ENCODE measurements at regions of chr2 and their contacts with region 1.

Region 1: DNA sequence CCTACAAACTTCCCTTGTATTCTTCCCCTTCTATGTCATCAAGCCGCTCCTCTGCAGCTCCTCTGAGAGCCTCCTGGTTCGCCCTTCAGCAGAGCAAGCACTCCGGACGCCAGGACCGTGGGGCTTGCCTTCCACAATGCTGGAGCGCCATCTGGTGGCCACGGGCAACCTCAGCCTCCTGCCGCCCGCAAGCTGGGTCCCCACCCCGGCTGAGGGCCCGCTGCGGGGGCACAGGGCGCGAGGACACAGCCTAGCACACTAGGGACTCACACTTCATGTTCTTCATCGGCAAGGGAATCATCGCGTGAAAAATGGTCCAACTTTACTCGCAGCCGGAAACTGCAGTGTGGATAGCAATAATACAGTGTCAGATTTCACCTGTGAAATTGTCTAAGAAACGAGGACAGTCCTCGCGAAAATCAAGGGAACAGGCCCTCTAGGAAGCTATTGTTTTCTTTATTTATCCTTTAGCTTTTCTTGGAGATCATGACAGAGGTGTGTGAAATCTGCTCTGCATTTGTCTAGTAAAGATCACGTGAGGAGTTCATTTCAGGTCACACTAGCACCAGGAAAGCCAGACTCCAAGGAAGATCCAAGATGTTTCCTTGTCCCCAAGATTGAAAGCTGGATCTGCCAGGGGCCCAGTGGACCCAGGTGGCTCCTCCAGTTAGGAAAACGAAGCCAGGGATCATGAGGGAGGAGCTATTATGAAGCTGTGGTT is 5.8 kb downstream of the PRLH start:
- DNase-seq: peak; percentile 82
- H3K4me3 Mint-ChIP-seq: peak overlapping the region; percentile 35
- H3K27ac Mint-ChIP-seq: peak overlapping the region; percentile 16
- H3K4me1 Mint-ChIP-seq: peaks cover 17% of the 10 kb centered on the region
- H3K27me3 Mint-ChIP-seq: no peaks in the 10 kb centered on the region
- CTCF ChIP-seq: peak; percentile 97

Region 2: DNA sequence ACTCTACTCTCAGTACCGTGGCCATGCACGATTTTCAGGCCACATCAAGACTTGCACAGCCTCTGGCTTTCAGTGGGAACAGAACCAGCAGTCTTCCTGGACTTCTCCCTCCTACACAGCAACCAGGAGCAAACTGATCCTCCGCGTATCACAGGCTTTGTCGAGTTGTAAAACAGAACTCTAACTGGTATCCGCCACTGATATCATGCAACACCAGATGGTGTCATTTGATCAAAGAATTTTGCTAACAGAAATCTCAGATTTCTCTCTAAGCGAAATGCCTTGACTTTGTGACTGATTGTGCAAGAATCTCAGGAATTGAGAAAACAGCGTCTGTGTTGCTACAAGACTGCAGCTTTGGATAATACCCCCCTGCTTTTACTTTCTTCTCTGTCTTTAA is 400.8 kb before region 1 on chr2:
- CTCF ChIA-PET with region 1: interaction called, 3 read pairs
- POLR2A ChIA-PET with region 1: no interaction called
- intact Hi-C with region 1: loop called (anchors 1 kb)
- DNase-seq: peak; percentile 88
- H3K4me3 Mint-ChIP-seq: no peak overlapping the region
- H3K27ac Mint-ChIP-seq: peak overlapping the region; percentile 84
- H3K4me1 Mint-ChIP-seq: peaks cover 14% of the 10 kb centered on the region
- H3K27me3 Mint-ChIP-seq: no peaks in the 10 kb centered on the region
- CTCF ChIP-seq: peak; percentile 38

Region 3: GRCh38 chr2:237474931-237475703 is 97.1 kb before region 1 on chr2:
- CTCF ChIA-PET with region 1: interaction called, 7 read pairs
- POLR2A ChIA-PET with region 1: no interaction called
- intact Hi-C with region 1: loop called (anchors 1 kb)
- DNase-seq: peak; percentile 65
- H3K4me3 Mint-ChIP-seq: peak overlapping the region; percentile 79
- H3K27ac Mint-ChIP-seq: peak overlapping the region; percentile 94
- H3K4me1 Mint-ChIP-seq: peaks cover 9% of the 10 kb centered on the region
- H3K27me3 Mint-ChIP-seq: no peaks in the 10 kb centered on the region
- CTCF ChIP-seq: peak; percentile 92

Region 4: DNA sequence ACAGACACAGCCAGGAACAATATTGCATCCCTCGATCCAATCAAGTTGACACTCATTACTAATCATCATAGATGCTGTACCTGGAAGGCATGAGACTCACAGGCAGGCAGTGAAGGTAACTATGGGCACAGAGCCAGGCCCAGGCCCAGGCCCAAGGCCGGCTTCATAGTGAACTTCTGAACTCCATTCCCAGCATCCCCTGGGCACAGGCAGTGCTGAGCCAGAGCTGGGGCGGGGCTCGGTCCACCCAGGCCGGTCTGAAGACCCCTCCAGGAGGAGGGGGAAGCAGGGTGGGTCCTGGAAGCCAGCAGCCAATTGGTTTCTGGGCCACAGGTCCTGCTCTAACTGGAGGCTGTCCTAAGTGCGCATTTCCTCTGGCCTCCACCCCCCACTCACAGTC is 47.5 kb before region 1 on chr2:
- CTCF ChIA-PET with region 1: interaction called, 15 read pairs
- POLR2A ChIA-PET with region 1: interaction called, 3 read pairs
- intact Hi-C with region 1: no loop called
- DNase-seq: peak; percentile 33
- H3K4me3 Mint-ChIP-seq: no peak overlapping the region
- H3K27ac Mint-ChIP-seq: no peak overlapping the region
- H3K4me1 Mint-ChIP-seq: no peaks in the 10 kb centered on the region
- H3K27me3 Mint-ChIP-seq: no peaks in the 10 kb centered on the region
- CTCF ChIP-seq: no peak

Region 5: DNA sequence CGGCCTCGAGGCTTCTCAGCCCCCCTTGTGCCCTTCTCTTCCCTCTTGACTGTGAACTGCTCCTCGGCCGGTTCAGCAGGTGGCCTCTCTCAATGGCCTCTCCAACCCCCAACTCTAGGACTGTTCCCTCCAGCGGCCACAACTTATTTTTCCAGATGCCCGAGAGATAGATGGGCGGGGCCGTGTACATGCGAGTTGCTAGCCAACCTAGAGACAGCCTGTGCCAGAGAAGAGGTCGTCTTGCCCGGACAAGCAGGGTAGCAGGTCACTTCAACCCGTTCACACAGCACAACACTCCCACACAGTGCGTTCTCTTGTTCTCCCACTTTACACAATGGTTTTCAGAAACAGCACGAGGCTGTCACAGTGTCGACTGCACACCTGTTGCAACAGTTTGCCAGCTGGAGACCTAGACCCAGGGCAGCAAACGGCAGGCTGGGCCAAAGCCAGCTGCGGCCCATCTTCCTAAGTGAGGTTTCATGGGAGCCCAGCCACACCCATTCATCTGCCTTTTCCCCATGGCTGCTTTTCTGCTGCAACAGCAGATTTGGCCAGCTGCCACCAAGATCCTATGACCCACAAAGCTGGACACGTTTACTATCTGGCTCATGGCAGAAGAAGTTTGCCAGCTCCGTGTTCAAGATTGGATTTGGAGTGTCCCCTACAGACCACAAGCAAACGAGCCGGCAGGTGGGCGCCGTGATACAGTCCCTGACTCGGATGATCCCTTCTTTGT is 13.1 kb before region 1 on chr2:
- CTCF ChIA-PET with region 1: interaction called, 31 read pairs
- POLR2A ChIA-PET with region 1: interaction called, 5 read pairs
- intact Hi-C with region 1: no loop called
- DNase-seq: peak; percentile 86
- H3K4me3 Mint-ChIP-seq: peak overlapping the region; percentile 34
- H3K27ac Mint-ChIP-seq: no peak overlapping the region
- H3K4me1 Mint-ChIP-seq: peaks cover 25% of the 10 kb centered on the region
- H3K27me3 Mint-ChIP-seq: peaks cover 11% of the 10 kb centered on the region
- CTCF ChIP-seq: no peak

Measured in MCF 10A (cell line).